Activated B cell treated with CpG ODN at 0.5 μM for 24 hours (primary cell): ENCODE measurements at regions of chr19 and their contacts with region 1.

Region 1: DNA sequence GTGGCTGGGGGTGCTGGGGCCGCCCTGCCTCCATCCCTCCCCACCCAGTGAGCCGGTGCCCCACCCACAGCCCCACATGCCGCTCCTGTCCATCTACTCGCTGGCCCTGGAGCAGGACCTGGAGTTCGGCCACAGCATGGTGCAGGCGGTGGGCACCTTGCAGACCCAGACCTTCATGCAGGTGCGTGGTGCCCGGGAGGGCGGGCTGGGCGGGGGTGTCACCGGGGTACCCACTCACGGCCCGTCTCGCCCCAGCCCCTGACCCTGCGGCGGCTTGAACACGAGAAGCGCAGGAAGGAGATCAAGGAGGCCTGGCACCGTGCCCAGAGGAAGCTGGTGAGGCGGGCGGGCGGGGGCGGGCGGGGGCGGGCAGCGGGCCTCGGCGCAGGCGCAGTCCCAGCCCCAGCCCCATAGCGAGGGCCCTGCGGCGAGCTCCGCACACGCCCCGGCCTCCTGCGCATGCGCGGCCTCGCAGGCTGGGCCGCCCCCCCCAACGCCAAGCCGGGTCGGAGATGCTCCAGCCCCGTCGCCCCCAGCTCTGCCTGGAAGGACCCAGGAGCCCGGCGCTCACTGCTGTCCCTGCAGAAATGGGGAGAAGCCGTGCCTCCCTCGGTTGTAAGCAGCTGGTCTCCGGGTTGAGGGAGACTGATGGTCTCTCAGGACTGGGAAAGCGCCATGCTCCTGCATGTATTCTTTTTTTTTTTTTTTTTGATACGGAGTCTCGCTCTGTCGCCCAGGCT is 7.7 kb downstream of the ARHGAP45 start:
- DNase-seq: peak; percentile 82
- ATAC-seq: peak; percentile 37
- H3K4me3 Mint-ChIP-seq: peak overlapping the region; percentile 53
- H3K27ac Mint-ChIP-seq: peak overlapping the region; percentile 93
- H3K4me1 Mint-ChIP-seq: peaks cover 62% of the 10 kb centered on the region
- H3K27me3 Mint-ChIP-seq: no peaks in the 10 kb centered on the region
- CTCF ChIP-seq: no peak

Region 2: GRCh38 chr19:1026189-1027019 is 48.3 kb before region 1 on chr19 and contains the start of gene CNN2:
- CTCF ChIA-PET with region 1: no interaction called
- POLR2A ChIA-PET with region 1: interaction called, 45 read pairs
- intact Hi-C with region 1: loop called (anchors 1 kb)
- DNase-seq: peak; percentile 76
- ATAC-seq: peak; percentile 61
- H3K4me3 Mint-ChIP-seq: peak within 1 kb of the TSS; percentile 95
- H3K27ac Mint-ChIP-seq: peak within 1 kb of the TSS; percentile 91
- H3K4me1 Mint-ChIP-seq: peaks cover 29% of the 10 kb centered on the region
- H3K27me3 Mint-ChIP-seq: no peaks in the 10 kb centered on the region
- CTCF ChIP-seq: no peak
- total RNA-seq, gene CNN2: 352 and 371 TPM in 2 replicates

Region 3: DNA sequence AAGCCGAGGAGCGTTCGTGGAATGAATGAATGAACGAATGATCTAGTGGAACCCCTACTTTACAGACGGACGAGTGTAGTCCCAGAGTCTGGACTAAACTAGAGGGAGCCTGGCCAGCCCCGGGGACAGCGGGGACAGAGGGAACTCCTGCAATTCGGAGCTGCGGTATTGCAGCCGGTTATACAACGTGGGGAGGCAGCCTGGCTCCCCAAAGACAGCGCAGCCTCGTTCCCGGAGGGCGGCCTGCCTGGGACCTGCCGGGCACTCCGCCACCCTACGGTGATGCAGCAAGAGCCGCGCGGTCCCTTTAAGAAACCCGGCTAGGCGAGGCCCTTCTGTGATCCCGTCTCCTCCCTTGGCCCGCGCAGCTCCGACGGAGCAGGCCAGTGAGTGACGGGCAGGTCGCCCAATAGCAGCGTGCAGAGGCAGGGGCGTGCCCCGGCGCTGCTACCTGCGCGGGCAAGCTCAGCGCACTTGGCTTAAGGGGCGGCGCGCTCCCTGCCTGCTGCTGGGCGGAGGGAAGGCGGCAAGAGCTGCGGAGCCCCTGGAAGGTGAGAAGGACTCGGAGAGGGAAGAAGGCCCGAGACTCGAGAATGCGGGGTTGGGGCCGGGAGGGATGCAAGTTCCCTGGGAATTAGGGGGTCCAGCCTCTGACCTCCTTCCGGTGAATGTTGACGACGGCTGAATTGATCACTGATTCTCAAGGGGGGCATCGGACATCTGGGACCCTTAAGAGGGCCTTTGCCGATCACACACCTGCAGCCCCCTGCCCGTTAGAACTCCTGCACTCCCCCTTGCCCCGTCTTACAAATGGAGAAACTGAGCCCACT is 34.9 kb before region 1 on chr19 and contains the start of gene ABCA7:
- CTCF ChIA-PET with region 1: no interaction called
- POLR2A ChIA-PET with region 1: interaction called, 25 read pairs
- intact Hi-C with region 1: loop called (anchors 1 kb)
- DNase-seq: peak; percentile 99
- ATAC-seq: peak; percentile 78
- H3K4me3 Mint-ChIP-seq: peak within 1 kb of the TSS; percentile 98
- H3K27ac Mint-ChIP-seq: peak within 1 kb of the TSS; percentile 96
- H3K4me1 Mint-ChIP-seq: peaks cover 61% of the 10 kb centered on the region
- H3K27me3 Mint-ChIP-seq: no peaks in the 10 kb centered on the region
- CTCF ChIP-seq: no peak
- total RNA-seq, gene ABCA7: 164 and 188 TPM in 2 replicates

Region 4: DNA sequence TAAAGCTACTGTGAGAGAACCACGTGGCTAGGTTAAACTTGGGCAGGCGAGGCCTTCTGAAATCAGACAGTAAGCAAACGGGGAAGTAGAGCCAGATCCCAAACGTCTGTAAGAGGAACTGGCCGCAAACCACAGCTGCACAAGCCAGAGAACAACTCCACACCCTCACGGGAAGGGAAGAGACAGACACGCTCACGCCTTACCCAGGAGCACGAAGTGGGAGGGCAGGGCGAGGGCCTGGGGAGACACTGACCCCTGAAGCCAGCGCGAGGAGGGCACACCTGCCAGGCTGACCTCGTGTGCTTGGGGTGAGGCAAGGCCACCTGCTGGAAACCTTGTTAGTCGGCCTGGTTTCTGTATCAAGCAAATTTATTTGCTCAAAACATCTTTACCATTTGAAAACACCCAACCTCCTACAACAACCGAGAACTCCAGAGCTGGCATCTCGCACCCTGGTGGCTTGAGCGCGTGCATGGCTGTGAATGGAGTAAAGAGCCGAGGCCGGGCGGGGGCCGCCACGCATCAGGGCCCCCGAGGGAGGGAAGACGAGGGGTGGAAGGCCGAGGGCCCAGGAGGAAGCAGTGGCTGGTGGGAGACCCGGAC is 13.2 kb after region 1 on chr19:
- CTCF ChIA-PET with region 1: interaction called, 4 read pairs
- POLR2A ChIA-PET with region 1: interaction called, 184 read pairs
- intact Hi-C with region 1: loop called (anchors 1 kb)
- DNase-seq: peak; percentile 45
- ATAC-seq: peak; percentile 64
- H3K4me3 Mint-ChIP-seq: peak overlapping the region; percentile 66
- H3K27ac Mint-ChIP-seq: peak overlapping the region; percentile 92
- H3K4me1 Mint-ChIP-seq: peaks cover 46% of the 10 kb centered on the region
- H3K27me3 Mint-ChIP-seq: no peaks in the 10 kb centered on the region
- CTCF ChIP-seq: no peak

Region 5: GRCh38 chr19:1173845-1174809 is 99.4 kb after region 1 on chr19 and contains the start of gene SBNO2:
- CTCF ChIA-PET with region 1: no interaction called
- POLR2A ChIA-PET with region 1: interaction called, 10 read pairs
- intact Hi-C with region 1: no loop called
- DNase-seq: peak; percentile 98
- ATAC-seq: peak; percentile 93
- H3K4me3 Mint-ChIP-seq: peak within 1 kb of the TSS; percentile 91
- H3K27ac Mint-ChIP-seq: peak within 1 kb of the TSS; percentile 89
- H3K4me1 Mint-ChIP-seq: peaks cover 26% of the 10 kb centered on the region
- H3K27me3 Mint-ChIP-seq: no peaks in the 10 kb centered on the region
- CTCF ChIP-seq: no peak
- total RNA-seq, gene SBNO2: 111 and 127 TPM in 2 replicates